Activated CD4-positive, alpha-beta memory T cell treated with anti-CD3 and anti-CD28 coated beads, Interleukin-2, amount 10 ng/mL, durations not matched to agents 7 days and 5 days (primary cell): ENCODE measurements at regions of chr4 and their contacts with region 1.

Region 1: GRCh38 chr4:88514557-88515511 is 8.7 kb downstream of the PYURF start:
- DNase-seq: no peak
- H3K4me3 Mint-ChIP-seq: no peak overlapping the region
- H3K27ac Mint-ChIP-seq: no peak overlapping the region
- H3K4me1 Mint-ChIP-seq: no peaks in the 10 kb centered on the region
- H3K27me3 Mint-ChIP-seq: peaks cover 2% of the 10 kb centered on the region

Region 2: GRCh38 chr4:88369936-88370335 is 144.9 kb before region 1 on chr4:
- CTCF ChIA-PET with region 1: interaction called, 22 read pairs
- POLR2A ChIA-PET with region 1: no interaction called
- DNase-seq: no peak
- H3K4me3 Mint-ChIP-seq: no peak overlapping the region
- H3K27ac Mint-ChIP-seq: no peak overlapping the region
- H3K4me1 Mint-ChIP-seq: peaks cover 10% of the 10 kb centered on the region
- H3K27me3 Mint-ChIP-seq: no peaks in the 10 kb centered on the region

Region 3: DNA sequence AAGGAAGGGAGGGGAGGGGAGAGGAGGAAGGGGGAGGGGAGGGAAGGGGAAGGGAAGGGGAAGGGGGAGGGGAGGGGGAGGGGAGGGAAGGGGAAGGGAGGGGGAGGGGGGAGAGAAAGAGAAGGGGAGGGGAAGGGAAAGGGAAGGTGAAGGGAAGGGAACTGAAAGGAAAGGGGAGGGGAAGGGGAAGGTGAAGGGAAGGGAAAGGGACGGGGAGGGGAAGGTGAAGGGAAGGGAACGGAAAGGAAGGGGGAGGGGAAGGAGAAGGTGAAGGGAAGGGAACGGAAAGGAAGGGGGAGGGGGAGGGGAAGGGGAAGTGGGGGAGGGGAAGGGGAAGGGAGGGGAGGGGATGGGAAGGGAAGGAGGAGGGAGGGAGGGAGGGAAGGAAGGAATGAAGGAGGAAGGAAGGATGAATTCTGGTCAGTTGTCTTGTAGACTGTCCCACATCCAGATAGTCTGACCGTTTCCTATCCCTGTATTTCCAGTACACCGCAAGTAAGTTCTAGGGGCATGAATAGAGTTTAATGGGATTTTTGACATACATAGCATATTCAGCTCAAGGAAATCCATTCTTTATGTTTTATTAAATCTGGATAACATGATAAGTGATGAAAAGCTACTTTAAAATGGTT is 37.5 kb before region 1 on chr4:
- CTCF ChIA-PET with region 1: no interaction called
- POLR2A ChIA-PET with region 1: no interaction called
- DNase-seq: no peak
- H3K4me3 Mint-ChIP-seq: no peak overlapping the region
- H3K27ac Mint-ChIP-seq: no peak overlapping the region
- H3K4me1 Mint-ChIP-seq: no peaks in the 10 kb centered on the region
- H3K27me3 Mint-ChIP-seq: no peaks in the 10 kb centered on the region

Region 4: GRCh38 chr4:88503344-88503743 is 11.5 kb before region 1 on chr4:
- CTCF ChIA-PET with region 1: interaction called, 18 read pairs
- POLR2A ChIA-PET with region 1: no interaction called
- DNase-seq: no peak
- H3K4me3 Mint-ChIP-seq: no peak overlapping the region
- H3K27ac Mint-ChIP-seq: peak overlapping the region; percentile 17
- H3K4me1 Mint-ChIP-seq: peaks cover 16% of the 10 kb centered on the region
- H3K27me3 Mint-ChIP-seq: no peaks in the 10 kb centered on the region